ENCODE measurements at regions of chr3 and their contacts with region 1.

Region 1: DNA sequence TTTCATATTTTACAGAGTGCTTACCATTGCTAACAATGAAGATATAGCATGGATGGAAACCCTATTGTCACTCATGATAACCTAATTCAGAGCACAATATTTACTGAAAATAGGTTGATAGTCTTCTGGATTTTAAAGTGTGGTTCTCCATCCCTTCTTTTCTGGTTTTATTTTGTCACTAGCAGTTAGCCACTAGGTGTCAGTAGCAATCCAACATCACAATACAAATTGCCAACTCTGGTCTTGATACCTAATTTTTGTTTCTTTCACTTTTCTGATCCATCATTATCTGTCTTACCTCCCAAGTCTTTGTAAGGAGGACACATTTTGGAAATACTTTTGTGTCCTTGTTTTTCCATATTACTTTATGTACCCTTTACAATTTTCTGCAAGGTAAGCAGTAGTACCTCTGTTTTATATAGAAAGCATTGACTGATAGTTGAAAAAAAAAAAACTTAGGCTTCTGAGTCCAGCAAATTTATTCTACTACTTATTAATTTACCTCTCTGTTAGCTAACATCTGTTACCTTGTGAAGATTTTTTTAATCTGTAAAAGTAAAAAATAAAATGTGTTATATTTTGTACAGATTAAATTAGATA is 28.3 kb upstream of the CRYBG3 start:
- DNase-seq: peak in 3 of 9 experiments; percentile 14 to 78 (median 73)
- ATAC-seq: peak; percentile 71
- H3K4me3 ChIP-seq: no peak overlapping the region
- H3K4me3 Mint-ChIP-seq: no peak overlapping the region
- H3K27ac ChIP-seq: no peak overlapping the region
- H3K27ac Mint-ChIP-seq: no peak overlapping the region
- H3K4me1 ChIP-seq: no peaks in the 10 kb centered on the region
- H3K4me1 Mint-ChIP-seq: no peaks in the 10 kb centered on the region
- H3K27me3 ChIP-seq: no peaks in the 10 kb centered on the region
- H3K27me3 Mint-ChIP-seq: no peaks in the 10 kb centered on the region
- CTCF ChIP-seq: peak; percentile 81

Region 2: DNA sequence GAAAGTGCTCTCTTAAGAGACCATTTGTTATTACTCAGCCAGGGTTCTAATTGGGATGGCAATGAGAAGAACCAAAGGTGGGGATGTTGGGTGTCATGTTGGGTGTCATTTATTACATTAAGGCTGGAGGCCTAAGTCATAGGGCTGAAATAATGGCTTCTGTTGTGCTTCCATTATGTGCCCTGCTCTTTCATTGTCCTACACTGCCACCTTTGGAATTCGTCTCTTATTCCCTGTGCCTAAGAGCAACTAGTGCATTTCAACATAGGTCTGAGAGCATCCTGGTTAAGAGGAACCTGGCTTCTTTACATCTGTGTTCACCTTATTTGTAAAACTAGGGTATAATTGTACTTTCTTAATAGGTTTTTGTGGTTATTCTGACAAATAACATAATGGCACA is 146.5 kb after region 1 on chr3:
- CTCF ChIA-PET with region 1: interaction called, 3 read pairs
- POLR2A ChIA-PET with region 1: no interaction called
- intact Hi-C with region 1: loop called (anchors 1 kb)
- DNase-seq: peak in 2 of 9 experiments; percentile 43 to 53
- ATAC-seq: no peak
- H3K4me3 ChIP-seq: no peak overlapping the region
- H3K4me3 Mint-ChIP-seq: no peak overlapping the region
- H3K27ac ChIP-seq: no peak overlapping the region
- H3K27ac Mint-ChIP-seq: peak overlapping the region; percentile 20
- H3K4me1 ChIP-seq: no peaks in the 10 kb centered on the region
- H3K4me1 Mint-ChIP-seq: no peaks in the 10 kb centered on the region
- H3K27me3 ChIP-seq: no peaks in the 10 kb centered on the region
- H3K27me3 Mint-ChIP-seq: no peaks in the 10 kb centered on the region
- CTCF ChIP-seq: no peak

Region 3: GRCh38 chr3:98329392-98330124 is 536.0 kb after region 1 on chr3:
- CTCF ChIA-PET with region 1: no interaction called
- POLR2A ChIA-PET with region 1: no interaction called
- intact Hi-C with region 1: loop called in 1 of 2 experiments (anchors 5 kb)
- DNase-seq: peak in 7 of 9 experiments; percentile 10 to 62 (median 37)
- ATAC-seq: peak; percentile 74
- H3K4me3 ChIP-seq: no peak overlapping the region
- H3K4me3 Mint-ChIP-seq: no peak overlapping the region
- H3K27ac ChIP-seq: no peak overlapping the region
- H3K27ac Mint-ChIP-seq: no peak overlapping the region
- H3K4me1 ChIP-seq: no peaks in the 10 kb centered on the region
- H3K4me1 Mint-ChIP-seq: peaks cover 3% of the 10 kb centered on the region
- H3K27me3 ChIP-seq: no peaks in the 10 kb centered on the region
- H3K27me3 Mint-ChIP-seq: peaks cover 21% of the 10 kb centered on the region
- CTCF ChIP-seq: peak; percentile 66

Measured in CD8-positive, alpha-beta T cell (primary cell).